ENCODE measurements at regions of chr22 and their contacts with region 1.

Region 1: DNA sequence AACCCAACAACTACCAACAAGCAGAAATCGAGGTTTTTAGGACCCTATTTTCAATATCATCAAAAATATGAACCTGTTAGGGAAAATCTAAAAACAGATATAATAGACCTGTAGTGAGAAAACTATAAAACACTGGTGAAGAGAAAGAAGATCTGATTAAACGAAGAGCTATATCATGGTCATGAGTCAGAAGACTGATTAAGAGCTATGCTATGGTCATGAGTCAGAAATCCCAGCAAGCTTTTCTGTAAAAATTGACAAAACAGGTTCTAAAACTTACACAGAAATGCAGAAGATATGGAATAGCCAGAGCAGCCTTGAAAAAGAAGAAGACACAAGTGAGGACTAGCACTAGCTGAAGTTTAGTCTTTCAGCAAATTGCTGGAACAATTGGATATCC is 345.0 kb downstream of the TBC1D22A start:
- DNase-seq: no peak

Region 2: DNA sequence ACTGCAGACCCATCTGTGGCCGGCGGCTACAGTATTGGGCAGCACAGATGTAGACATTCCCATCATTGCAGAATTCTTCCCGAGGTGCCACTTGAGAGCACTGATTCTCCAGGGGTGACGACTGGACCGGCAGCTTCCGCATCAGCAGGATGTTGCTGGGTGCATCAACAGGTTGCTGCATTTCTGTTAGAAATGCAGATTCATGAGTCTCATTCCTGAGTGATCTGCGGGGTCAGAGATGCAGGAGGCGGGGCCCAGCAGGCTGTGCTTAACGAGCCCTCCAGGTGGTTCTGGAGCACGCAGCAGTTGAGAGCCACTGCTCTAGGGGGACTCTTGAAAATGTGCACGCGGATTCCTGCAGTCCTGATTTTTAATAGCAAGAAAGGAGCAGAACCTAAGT is 23.2 kb before region 1 on chr22:
- intact Hi-C with region 1: loop called (anchors 2 kb)
- DNase-seq: no peak